OCI-LY7 (cell line): ENCODE measurements at regions of chr22 and their contacts with region 1.

Region 1: DNA sequence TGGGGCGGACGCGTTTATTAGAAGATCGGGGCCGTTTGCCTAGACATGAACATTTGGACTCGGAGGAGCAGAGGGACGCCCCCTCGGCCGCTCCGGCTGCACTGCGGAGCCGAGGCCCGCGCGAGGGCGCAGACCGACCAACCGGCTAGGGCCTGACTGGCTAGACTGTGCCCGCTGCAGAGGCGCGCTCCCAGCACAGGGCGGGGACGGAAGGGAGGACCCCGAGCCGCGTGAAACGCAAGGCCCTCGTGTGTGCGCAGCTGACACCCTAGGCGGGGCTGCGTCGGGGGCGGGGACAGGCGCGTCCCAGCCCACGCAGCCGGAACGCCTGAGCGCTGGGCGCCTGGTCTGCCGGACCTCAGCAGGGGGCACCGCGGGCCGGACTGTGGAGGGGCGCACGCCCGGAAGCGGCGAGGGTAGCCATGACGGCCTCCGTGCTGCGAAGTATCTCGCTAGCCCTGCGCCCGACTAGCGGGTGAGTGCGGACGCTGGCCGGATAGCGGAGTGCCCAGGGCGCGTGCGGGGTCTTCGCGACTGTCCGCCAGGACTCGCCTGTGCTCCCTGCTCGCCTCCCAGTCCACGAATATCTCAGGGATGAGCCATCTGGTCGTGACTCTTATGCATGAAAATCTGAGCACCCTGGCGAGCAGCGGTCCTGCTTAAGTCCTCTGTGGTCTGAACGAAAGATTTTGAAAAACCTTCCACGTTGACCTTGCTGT is at the start of gene MRPL40:
- DNase-seq: peak; percentile 96
- H3K4me3 ChIP-seq: peak within 1 kb of the TSS; percentile 98
- H3K27ac ChIP-seq: peak within 1 kb of the TSS; percentile 94
- H3K4me1 ChIP-seq: peaks cover 49% of the 10 kb centered on the region
- CTCF ChIP-seq: no peak
- total RNA-seq, gene MRPL40: 38.5 and 46.3 TPM in 2 replicates

Region 2: DNA sequence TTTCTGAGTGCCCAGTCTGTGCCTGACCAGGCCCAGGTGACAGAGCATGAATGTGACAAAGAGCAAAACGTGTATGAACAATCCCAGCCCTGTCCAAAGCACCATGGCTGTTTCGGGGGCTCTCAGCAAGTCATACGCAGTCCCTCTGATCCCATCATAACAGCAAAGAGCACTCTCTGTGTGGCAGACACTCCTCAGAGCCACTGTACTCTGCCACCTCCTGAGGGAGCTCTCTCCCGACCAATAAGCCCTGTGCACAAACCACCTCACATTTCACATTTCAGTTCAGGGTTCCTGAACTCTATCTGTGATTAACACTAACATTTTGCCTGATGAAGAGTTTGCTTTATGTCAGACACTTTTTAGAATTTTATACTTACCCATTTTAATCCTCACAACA is 316.7 kb before region 1 on chr22:
- CTCF ChIA-PET with region 1: no interaction called
- POLR2A ChIA-PET with region 1: no interaction called
- intact Hi-C with region 1: loop called (anchors 5 kb)
- DNase-seq: peak; percentile 43
- H3K4me3 ChIP-seq: no peak overlapping the region
- H3K27ac ChIP-seq: no peak overlapping the region
- H3K4me1 ChIP-seq: peaks cover 64% of the 10 kb centered on the region
- CTCF ChIP-seq: peak; percentile 73

Region 3: GRCh38 chr22:19178656-19179496 is 253.4 kb before region 1 on chr22 and contains the start of gene SLC25A1:
- CTCF ChIA-PET with region 1: no interaction called
- POLR2A ChIA-PET with region 1: no interaction called
- intact Hi-C with region 1: loop called (anchors 5 kb)
- DNase-seq: peak; percentile 93
- H3K4me3 ChIP-seq: peak within 1 kb of the TSS; percentile 88
- H3K27ac ChIP-seq: peak within 1 kb of the TSS; percentile 63
- H3K4me1 ChIP-seq: peaks cover 70% of the 10 kb centered on the region
- CTCF ChIP-seq: no peak
- total RNA-seq, gene SLC25A1: 52.4 and 59.5 TPM in 2 replicates

Region 4: GRCh38 chr22:19291580-19292457 is 140.5 kb before region 1 on chr22 and contains the start of gene CLTCL1:
- CTCF ChIA-PET with region 1: no interaction called
- POLR2A ChIA-PET with region 1: no interaction called
- intact Hi-C with region 1: no loop called
- DNase-seq: peak; percentile 82
- H3K4me3 ChIP-seq: peak within 1 kb of the TSS; percentile 74
- H3K27ac ChIP-seq: no peak within 1 kb of the TSS
- H3K4me1 ChIP-seq: peaks cover 16% of the 10 kb centered on the region
- CTCF ChIP-seq: no peak
- total RNA-seq, gene CLTCL1: 0.31 and 0.44 TPM in 2 replicates

Region 5: DNA sequence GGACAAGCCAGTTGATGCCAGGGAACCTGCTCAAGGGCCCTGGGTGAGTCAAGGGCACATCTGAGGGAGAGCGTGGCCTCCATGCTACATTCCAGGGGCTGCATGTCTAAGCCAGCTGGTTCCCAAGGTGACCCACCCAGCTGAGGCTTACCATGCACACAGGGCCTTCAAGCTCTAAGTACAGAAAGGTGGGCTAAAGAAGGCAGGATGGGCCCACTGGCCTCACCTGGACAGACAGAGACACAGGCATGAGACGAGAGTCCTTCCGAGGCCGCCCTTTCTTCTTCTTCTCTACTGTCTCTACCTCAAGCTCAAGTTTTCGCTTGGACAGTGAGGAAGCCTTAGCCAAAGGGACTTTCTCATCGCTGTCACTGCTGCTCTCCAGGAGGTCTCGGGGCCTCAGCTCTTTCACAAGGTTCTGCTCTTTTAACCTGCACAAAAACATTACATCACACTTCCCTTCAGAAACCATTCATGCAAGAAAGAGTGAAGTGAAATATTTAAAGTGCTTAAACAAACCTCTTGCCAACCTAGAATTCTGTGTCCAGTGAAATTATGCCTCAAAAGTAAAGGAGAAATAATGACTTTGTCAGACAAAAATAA is 70.7 kb before region 1 on chr22:
- CTCF ChIA-PET with region 1: no interaction called
- POLR2A ChIA-PET with region 1: no interaction called
- intact Hi-C with region 1: loop called (anchors 1 kb)
- DNase-seq: peak; percentile 83
- H3K4me3 ChIP-seq: no peak overlapping the region
- H3K27ac ChIP-seq: peak overlapping the region; percentile 42
- H3K4me1 ChIP-seq: peaks cover 18% of the 10 kb centered on the region
- CTCF ChIP-seq: no peak

Region 6: GRCh38 chr22:19479357-19480172 is 47.3 kb after region 1 on chr22 and contains the start of gene CDC45:
- CTCF ChIA-PET with region 1: no interaction called
- POLR2A ChIA-PET with region 1: interaction called, 3 read pairs
- intact Hi-C with region 1: loop called (anchors 2 kb)
- DNase-seq: peak; percentile 98
- H3K4me3 ChIP-seq: peak within 1 kb of the TSS; percentile 94
- H3K27ac ChIP-seq: peak within 1 kb of the TSS; percentile 75
- H3K4me1 ChIP-seq: peaks cover 14% of the 10 kb centered on the region
- CTCF ChIP-seq: no peak
- total RNA-seq, gene CDC45: 80.2 and 90.9 TPM in 2 replicates